H1 (cell line): ENCODE measurements at regions of chr1 and their contacts with region 1.

Region 1: DNA sequence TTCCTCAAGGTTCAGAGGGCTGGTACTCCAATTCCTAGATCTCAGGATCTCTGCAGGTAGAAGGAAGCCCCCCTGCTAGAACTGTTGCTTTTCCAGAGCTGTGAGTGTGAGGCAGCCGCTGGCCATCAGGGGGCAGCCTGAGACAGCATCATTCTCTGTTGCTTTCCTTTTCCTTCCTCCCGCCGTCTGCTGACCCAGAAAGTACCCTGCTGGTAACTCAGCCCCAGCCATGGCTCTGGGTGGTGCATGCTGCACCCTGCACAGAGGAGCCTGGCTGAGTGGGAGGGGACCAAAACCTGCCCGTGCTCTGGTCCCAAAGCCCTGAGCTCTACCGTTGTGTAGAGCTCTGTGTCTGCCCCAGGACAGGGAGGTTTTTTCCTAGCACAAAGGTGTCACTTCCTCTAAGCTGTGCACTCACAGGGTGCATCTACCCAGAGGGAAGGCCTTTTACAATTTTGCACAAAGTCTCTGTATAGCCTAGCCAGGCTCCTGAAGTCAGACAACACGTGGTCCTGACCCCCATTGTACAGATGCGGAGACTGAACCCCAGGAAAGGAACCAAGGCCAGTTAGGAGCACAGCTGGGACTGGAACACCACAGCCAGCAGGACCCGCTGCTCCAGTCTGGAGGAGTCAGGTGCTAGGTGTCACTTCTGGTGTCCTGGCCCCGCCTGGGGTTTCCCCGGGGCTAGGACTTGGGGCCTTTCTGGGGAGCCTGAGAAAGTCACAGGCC is 5.6 kb upstream of the FAM131C start:
- DNase-seq: peak; percentile 62 to 92
- H3K4me3 ChIP-seq: no peak overlapping the region
- H3K27ac ChIP-seq: no peak overlapping the region
- H3K4me1 ChIP-seq: peaks cover 0 to 9% (median 4%) of the 10 kb centered on the region in 4 experiments; a peak in 5 of 7 replicates
- H3K27me3 ChIP-seq: peaks cover under 1 to 17% (median 13%) of the 10 kb centered on the region in 4 experiments
- CTCF ChIP-seq: peak; percentile 94 to 99 (median 97)
- EP300 ChIP-seq: no peak; a peak in 1 of 3 replicates
- POLR2A ChIP-seq: no peak
- RAD21 ChIP-seq: peak; percentile 98 to 99

Region 2: DNA sequence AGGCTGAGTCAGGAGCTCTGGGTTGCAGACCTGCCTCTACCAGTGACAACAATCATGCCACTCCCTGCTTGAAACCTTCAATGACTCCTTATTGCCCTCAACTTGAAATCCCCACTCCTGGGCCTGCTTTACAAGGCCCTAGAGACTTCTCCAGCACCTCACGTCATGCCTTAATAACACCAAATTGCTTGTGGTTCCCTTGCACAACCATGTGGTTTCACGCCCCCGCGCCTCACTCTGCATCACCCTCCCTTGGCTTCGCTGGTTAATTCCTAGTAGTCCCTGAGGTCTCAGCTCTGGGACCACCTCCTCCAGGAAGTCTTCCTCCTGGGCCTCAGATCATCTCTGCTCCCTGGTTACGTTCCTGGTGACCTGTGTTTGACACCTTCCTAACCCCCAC is 43.8 kb after region 1 on chr1:
- CTCF ChIA-PET with region 1: interaction called, 522 read pairs
- POLR2A ChIA-PET with region 1: interaction called, 7 read pairs
- DNase-seq: no peak
- H3K4me3 ChIP-seq: no peak overlapping the region
- H3K27ac ChIP-seq: no peak overlapping the region
- H3K4me1 ChIP-seq: peaks cover 0 to 18% (median 10%) of the 10 kb centered on the region in 4 experiments; a peak in 5 of 7 replicates
- H3K27me3 ChIP-seq: no peaks in the 10 kb centered on the region
- CTCF ChIP-seq: no peak
- EP300 ChIP-seq: no peak
- POLR2A ChIP-seq: no peak
- RAD21 ChIP-seq: no peak

Region 3: DNA sequence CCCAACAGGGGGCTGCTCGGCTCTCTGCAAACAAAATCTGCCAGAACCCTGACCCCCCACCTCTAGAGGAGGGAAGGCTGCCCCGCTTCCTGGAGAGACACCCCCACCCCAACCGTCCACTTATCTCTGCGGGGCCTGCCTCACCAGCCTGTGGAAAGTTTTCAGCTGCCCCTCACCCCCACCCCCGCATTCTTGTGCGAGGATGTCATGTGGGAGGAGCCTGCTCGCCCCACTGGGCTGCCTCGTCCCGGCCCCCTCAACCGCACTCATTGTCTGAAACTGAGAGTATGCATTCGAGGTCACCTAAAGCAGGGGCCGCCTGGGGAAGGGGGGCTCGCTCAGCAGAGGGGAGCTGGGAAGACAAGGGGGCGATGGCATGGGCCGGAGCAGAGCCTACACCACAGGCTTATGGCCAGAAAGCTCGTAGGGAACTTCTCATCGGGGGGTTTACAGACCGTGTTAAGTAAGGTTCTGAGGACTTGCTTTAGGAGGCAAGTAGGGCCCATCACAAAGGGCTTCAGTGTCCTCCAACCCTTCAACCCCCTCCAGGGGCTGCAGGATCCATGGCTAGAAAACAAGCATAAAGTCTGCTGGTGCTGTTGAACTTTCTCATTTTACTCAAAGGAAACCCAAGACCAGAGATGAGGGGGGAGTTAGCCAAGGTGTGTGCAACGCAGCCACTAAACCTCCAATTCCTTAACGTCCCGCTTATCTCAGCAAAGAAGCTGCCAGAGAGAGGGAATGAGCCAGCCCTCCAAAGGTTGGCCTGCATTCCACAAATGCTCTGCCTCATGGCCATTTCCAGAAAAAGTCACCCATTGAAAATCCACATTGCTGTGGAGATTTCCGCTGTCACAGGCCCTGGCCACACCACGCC is 67.4 kb after region 1 on chr1:
- CTCF ChIA-PET with region 1: interaction called, 202 read pairs
- POLR2A ChIA-PET with region 1: interaction called, 13 read pairs
- DNase-seq: peak; percentile 72 to 91
- H3K4me3 ChIP-seq: peak overlapping the region; percentile 3 to 49 (median 28); a peak in 7 of 8 replicates
- H3K27ac ChIP-seq: peak overlapping the region; percentile 69; the same call in 1 of the 2 replicates
- H3K4me1 ChIP-seq: peaks cover 18 to 49% (median 36%) of the 10 kb centered on the region in 4 experiments
- H3K27me3 ChIP-seq: no peaks in the 10 kb centered on the region
- CTCF ChIP-seq: no peak
- EP300 ChIP-seq: no peak
- POLR2A ChIP-seq: peak in 1 of 2 experiments; percentile 44; a peak in 1 of 3 replicates
- RAD21 ChIP-seq: no peak; a peak in 1 of 4 replicates

Region 4: GRCh38 chr1:16167331-16168143 is 88.4 kb after region 1 on chr1:
- CTCF ChIA-PET with region 1: interaction called, 70 read pairs
- POLR2A ChIA-PET with region 1: interaction called, 5 read pairs
- DNase-seq: peak; percentile 82 to 91
- H3K4me3 ChIP-seq: peak overlapping the region; percentile 36 to 68 (median 42)
- H3K27ac ChIP-seq: peak overlapping the region; percentile 43; the same call in 1 of the 2 replicates
- H3K4me1 ChIP-seq: peaks cover 4 to 22% (median 12%) of the 10 kb centered on the region in 4 experiments
- H3K27me3 ChIP-seq: no peaks in the 10 kb centered on the region; a peak in 2 of 7 replicates
- CTCF ChIP-seq: no peak
- EP300 ChIP-seq: 0 out of 3 replicates have a peak, but pooled peaks of 1 of the 2 experiments have one; percentile 12
- POLR2A ChIP-seq: peak in 1 of 2 experiments; percentile 66; a peak in 2 of 3 replicates
- RAD21 ChIP-seq: no peak

Region 5: DNA sequence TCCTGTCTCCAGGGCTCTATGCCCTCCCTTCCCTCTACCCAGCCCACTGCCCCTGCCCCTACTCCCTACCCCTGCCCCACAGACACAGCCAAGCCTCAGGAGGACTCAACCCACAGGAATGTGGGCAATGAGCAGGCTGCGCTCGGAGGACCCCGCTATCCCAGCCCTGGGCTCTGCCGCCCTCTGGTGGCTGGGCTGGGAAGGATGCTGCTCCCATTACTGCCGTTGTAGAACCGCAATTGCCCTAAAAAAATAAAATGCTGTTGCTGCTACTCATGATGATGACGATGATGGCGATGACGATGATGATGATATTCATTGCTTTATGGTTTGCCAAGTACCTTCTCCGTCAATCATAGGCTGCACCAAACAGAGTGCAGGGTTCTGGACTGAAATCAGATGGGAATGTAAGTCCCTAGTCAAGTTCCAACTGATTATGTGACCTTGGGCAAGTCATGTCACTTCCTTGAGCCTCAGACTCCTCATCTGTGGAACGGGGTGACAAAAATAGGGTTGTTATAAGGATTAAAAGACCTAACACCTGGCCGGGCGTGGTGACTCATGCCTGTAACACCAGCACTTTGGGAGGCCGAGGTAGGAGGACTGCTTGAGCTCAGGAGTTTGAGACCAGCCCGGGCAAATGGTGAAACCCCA is 108.8 kb after region 1 on chr1:
- CTCF ChIA-PET with region 1: interaction called, 569 read pairs
- POLR2A ChIA-PET with region 1: interaction called, 7 read pairs
- DNase-seq: peak in 1 of 2 experiments; percentile 95
- H3K4me3 ChIP-seq: no peak overlapping the region
- H3K27ac ChIP-seq: no peak overlapping the region
- H3K4me1 ChIP-seq: no peaks in the 10 kb centered on the region
- H3K27me3 ChIP-seq: no peaks in the 10 kb centered on the region; a peak in 1 of 7 replicates
- CTCF ChIP-seq: peak; percentile 92 to 98 (median 95)
- EP300 ChIP-seq: no peak
- POLR2A ChIP-seq: no peak
- RAD21 ChIP-seq: peak; percentile 100

Region 6: DNA sequence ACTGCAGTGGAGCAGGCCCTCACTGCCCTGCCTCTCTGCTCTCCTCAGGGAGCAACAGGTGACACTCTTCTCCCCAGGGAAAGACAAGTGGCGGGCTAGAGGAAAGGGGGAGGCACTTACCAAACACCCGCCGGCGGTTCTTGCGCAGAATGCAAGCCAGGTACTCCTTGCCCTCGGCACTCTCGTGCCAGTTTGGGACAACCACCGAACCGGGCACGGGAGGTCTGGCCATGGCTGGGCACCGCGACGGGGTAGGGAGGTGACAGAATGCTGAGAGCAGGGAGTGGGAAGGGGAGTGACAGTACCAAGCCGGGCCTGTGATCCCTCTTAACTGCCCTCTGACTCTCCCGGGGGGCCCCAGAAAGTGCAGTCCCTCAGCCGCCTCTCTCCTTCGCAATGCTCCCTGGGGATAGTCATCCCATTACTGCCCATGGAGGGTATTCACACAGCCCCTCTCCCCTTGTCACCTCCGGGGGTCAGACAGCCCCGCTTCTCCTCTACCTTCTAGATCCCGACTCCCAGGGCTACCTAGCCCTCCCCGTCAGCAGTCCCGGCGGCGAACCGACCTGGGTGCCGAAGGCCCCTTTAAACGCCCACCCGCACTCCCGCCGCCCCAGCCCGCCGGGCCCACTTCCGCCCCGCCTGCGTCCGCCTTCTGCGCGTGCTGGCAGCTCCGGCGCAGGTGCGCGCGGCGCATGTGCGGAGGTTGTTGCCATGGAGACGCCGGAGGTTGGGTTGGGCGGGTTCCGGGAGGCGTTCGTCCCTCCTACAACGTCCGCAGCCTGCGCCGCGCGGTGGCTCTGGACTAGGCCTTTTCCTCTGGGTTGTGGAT is 157.6 kb after region 1 on chr1 and contains the start of gene CPLANE2:
- CTCF ChIA-PET with region 1: interaction called, 96 read pairs
- POLR2A ChIA-PET with region 1: no interaction called
- DNase-seq: peak; percentile 73 to 98
- H3K4me3 ChIP-seq: peak within 1 kb of the TSS; percentile 60 to 74 (median 72)
- H3K27ac ChIP-seq: no peak within 1 kb of the TSS
- H3K4me1 ChIP-seq: peaks cover 0 to 9% (median 3%) of the 10 kb centered on the region in 4 experiments; a peak in 6 of 7 replicates
- H3K27me3 ChIP-seq: no peaks in the 10 kb centered on the region; a peak in 1 of 7 replicates
- CTCF ChIP-seq: no peak
- EP300 ChIP-seq: peak in 1 of 2 experiments; percentile 19; a peak in 1 of 3 replicates
- POLR2A ChIP-seq: peak in 1 of 2 experiments; percentile 20; a peak in 1 of 3 replicates
- RAD21 ChIP-seq: no peak
- total RNA-seq, gene CPLANE2: 2.5 and 2.7 TPM in 2 replicates